ENCODE measurements at regions of chr12 and their contacts with region 1.

Region 1: GRCh38 chr12:7638760-7639555 is 26.8 kb downstream of the APOBEC1 start:
- DNase-seq: peak; percentile 86
- H3K4me3 ChIP-seq: peak overlapping the region in 1 of 4 donors; percentile 41
- H3K27ac ChIP-seq: peak overlapping the region in 1 of 4 donors; percentile 18
- H3K4me1 ChIP-seq: peaks cover 0 to 10% (median 0%) of the 10 kb centered on the region in 4 donors
- H3K27me3 ChIP-seq: peaks cover 0 to 14% (median 0%) of the 10 kb centered on the region in 3 donors
- CTCF ChIP-seq: peak; percentile 77 to 88 (median 86)
- EP300 ChIP-seq: no peak
- POLR2A ChIP-seq: no peak

Region 2: GRCh38 chr12:7219599-7220243 is 419.2 kb before region 1 on chr12:
- intact Hi-C with region 1: loop called (anchors 1 kb)
- DNase-seq: peak; percentile 77
- H3K4me3 ChIP-seq: no peak overlapping the region
- H3K27ac ChIP-seq: no peak overlapping the region
- H3K4me1 ChIP-seq: no peaks in the 10 kb centered on the region
- H3K27me3 ChIP-seq: no peaks in the 10 kb centered on the region
- CTCF ChIP-seq: peak; percentile 63 to 82 (median 78)
- EP300 ChIP-seq: no peak
- POLR2A ChIP-seq: no peak

Region 3: GRCh38 chr12:7583571-7583970 is 55.4 kb before region 1 on chr12:
- intact Hi-C with region 1: loop called (anchors 2 kb)
- DNase-seq: no peak
- H3K4me3 ChIP-seq: no peak overlapping the region
- H3K27ac ChIP-seq: no peak overlapping the region
- H3K4me1 ChIP-seq: no peaks in the 10 kb centered on the region
- H3K27me3 ChIP-seq: no peaks in the 10 kb centered on the region
- CTCF ChIP-seq: no peak
- EP300 ChIP-seq: no peak
- POLR2A ChIP-seq: no peak

Measured in sigmoid colon (tissue), 7 donors.